ENCODE measurements at regions of chr3 and their contacts with region 1.

Region 1: DNA sequence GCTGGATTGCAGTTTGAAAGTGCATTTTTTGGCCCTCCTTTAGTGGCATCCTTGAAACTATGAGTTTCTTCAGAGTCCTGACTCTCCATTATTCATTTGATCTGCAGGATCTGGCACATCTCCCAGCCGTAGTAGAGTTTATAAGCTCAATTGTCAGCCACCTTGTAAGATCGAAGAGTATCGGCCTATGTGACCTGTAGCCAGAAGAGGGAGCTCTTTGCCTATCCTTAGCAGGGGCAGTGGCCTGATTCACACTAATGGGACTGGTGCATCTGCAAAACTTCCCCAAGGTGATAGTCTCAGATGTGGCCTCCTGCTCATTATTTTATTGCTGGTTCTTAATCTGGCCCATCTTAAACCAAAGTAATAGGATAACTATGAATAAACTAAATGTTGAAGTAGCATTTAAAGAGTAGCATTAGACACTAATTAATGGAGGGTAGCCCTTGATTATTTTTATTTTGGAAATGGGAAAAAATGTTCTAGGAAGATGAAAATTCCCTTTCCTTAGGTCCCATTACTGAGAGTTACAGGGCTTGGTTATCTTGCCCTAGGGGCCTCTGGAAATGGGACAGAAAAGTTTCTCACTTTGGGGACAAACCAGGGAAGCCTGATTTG is 21.2 kb downstream of the GCSAM start:
- DNase-seq: no peak
- ATAC-seq: peak; percentile 79
- H3K4me3 Mint-ChIP-seq: no peak overlapping the region
- H3K27ac Mint-ChIP-seq: no peak overlapping the region
- H3K4me1 Mint-ChIP-seq: peaks cover 53% of the 10 kb centered on the region
- H3K27me3 Mint-ChIP-seq: no peaks in the 10 kb centered on the region
- CTCF ChIP-seq: peak; percentile 68

Region 2: DNA sequence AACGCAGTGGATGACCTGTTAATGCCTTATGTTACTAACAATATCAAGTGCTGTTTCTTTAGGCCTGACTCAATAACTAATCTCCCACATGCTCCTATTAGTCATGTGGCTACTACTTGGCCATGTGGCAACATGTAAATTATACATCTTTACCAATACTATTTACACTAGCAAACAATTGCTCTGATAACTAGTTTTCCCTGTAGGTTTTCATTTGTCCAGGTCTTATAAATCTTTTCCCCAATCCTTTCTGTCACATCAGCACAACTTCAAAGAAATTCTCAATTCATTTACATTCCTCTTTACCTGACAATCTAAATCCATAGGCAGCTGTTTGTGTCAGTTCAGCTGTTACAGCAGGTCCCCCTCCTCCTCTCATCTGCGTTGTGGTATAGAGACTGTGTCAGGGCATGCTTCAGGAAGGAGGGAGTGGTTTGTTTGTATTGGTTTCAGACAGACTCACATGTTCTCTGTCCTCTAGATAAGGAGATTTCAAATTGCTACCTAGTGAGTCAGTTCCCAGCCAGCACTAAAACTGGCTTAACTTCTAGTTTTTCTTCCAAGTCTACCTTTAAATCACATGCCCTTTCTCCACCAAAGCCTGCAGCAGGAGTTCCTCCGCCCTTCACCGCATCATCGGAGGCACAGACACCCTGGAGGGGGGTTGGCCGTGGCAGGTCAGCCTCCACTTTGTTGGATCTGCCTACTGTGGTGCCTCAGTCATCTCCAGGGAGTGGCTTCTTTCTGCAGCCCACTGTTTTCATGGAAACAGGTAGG is 37.0 kb before region 1 on chr3:
- CTCF ChIA-PET with region 1: no interaction called
- POLR2A ChIA-PET with region 1: no interaction called
- intact Hi-C with region 1: no loop called
- DNase-seq: no peak
- ATAC-seq: no peak
- H3K4me3 Mint-ChIP-seq: no peak overlapping the region
- H3K27ac Mint-ChIP-seq: no peak overlapping the region
- H3K4me1 Mint-ChIP-seq: peaks cover 4% of the 10 kb centered on the region
- H3K27me3 Mint-ChIP-seq: peaks cover 22% of the 10 kb centered on the region
- CTCF ChIP-seq: no peak

Region 3: GRCh38 chr3:112303764-112304325 is 192.0 kb after region 1 on chr3:
- CTCF ChIA-PET with region 1: interaction called, 11 read pairs
- POLR2A ChIA-PET with region 1: interaction called, 3 read pairs
- intact Hi-C with region 1: no loop called
- DNase-seq: peak; percentile 20
- ATAC-seq: peak; percentile 88
- H3K4me3 Mint-ChIP-seq: no peak overlapping the region
- H3K27ac Mint-ChIP-seq: no peak overlapping the region
- H3K4me1 Mint-ChIP-seq: peaks cover 7% of the 10 kb centered on the region
- H3K27me3 Mint-ChIP-seq: no peaks in the 10 kb centered on the region
- CTCF ChIP-seq: no peak

Region 4: DNA sequence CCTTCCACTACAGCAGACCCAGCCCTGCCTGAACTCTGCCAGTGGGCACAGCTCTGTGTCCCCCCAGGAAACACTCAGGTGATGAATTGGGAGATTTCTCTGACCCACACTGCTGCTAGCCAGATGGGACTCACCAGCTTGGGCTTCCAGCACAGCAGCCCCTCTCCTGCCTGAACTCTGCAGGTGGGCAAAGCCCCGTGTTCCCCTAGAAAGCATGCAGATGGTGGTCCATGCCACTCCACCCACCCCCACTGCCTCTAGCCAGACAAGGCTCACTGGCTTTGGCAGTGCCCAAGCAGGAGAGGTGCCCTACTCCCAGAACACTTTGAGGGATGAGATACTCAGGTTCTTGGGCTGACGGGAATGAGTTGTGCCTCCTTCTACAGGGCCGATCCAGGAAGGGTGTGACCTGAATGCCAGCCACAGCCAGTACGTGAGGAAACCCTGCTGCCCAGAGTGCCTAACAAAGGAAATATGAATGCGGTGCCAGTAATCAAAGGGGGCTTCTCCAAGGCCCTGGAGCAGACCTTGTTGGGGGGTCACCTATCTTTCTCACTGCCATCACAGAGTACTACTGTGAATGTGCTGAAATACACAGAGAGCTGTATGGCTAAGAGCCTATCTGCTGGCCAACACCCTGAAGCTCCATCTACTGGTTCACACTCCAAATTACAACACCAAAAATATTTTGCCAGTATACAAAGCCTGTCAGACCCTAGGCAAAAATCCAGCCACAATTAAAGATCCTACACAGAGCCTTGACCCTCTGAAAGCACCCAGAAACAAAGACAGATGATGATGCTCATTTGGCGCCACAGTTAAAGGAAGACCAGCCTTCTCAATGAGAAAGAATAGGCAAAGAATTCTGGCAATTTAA is 325.5 kb after region 1 on chr3:
- CTCF ChIA-PET with region 1: interaction called, 10 read pairs
- POLR2A ChIA-PET with region 1: no interaction called
- intact Hi-C with region 1: loop called (anchors 1 kb)
- DNase-seq: no peak
- ATAC-seq: peak; percentile 84
- H3K4me3 Mint-ChIP-seq: no peak overlapping the region
- H3K27ac Mint-ChIP-seq: no peak overlapping the region
- H3K4me1 Mint-ChIP-seq: peaks cover 58% of the 10 kb centered on the region
- H3K27me3 Mint-ChIP-seq: no peaks in the 10 kb centered on the region
- CTCF ChIP-seq: no peak

Region 5: DNA sequence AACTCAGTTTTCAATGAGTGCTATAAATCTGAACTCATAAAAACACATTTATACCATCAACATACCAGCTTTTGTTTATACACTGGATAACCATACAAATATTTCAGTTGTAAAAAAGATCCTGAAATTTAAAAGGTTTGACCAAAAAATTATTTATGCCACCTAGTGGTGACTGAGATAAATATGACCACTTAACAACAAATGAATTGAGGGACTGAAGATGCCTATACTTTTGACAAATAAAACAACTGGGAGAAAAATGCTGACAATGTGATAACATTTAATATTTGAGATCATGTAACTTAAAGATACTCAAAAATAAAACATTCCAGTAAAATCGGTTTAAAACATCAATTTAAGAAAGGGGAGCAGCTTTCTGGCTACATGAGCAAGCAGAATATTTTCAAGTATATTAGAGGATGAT is 419.5 kb after region 1 on chr3:
- CTCF ChIA-PET with region 1: interaction called, 20 read pairs
- POLR2A ChIA-PET with region 1: no interaction called
- intact Hi-C with region 1: loop called (anchors 1 kb)
- DNase-seq: no peak
- ATAC-seq: no peak
- H3K4me3 Mint-ChIP-seq: no peak overlapping the region
- H3K27ac Mint-ChIP-seq: peak overlapping the region; percentile 27
- H3K4me1 Mint-ChIP-seq: peaks cover 3% of the 10 kb centered on the region
- H3K27me3 Mint-ChIP-seq: no peaks in the 10 kb centered on the region
- CTCF ChIP-seq: peak; percentile 9